GM10248 (cell line): ENCODE measurements at regions of chr2 and their contacts with region 1.

Region 1: GRCh38 chr2:231713730-231714430 is 5.6 kb downstream of the PTMA start:
- DNase-seq: peak; percentile 76
- CTCF ChIP-seq: peak; percentile 95

Region 2: DNA sequence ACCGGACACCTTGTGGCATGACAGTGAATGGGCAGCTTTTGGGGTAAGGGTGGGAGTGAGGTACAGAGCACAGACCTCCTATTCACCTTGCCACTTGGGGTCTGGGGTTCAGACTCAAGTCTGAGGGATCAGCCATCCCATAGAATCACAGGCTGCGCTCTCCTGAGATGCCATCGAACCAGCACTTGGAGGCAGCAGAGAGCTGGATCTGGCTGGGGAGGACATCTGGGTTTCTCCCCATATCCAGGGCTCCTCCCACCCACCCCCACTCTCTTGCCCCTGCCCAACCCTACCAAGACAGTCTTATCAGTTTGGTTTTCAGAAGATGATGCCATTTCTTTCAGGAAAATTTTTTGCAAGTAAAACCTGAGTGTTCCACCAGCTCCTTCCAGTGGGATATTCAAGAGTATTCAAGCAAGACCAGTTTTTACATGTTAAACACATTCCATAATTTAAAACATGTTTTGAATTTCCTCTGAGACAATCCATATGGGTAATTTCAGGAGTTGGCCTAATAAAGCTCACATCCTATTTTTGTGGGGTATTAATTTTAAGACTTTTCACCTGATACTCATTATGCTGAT is 150.4 kb before region 1 on chr2:
- CTCF ChIA-PET with region 1: interaction called, 24 read pairs
- POLR2A ChIA-PET with region 1: no interaction called
- DNase-seq: peak; percentile 79
- CTCF ChIP-seq: peak; percentile 76

Region 3: GRCh38 chr2:231621129-231621879 is 92.6 kb before region 1 on chr2:
- CTCF ChIA-PET with region 1: interaction called, 10 read pairs
- POLR2A ChIA-PET with region 1: no interaction called
- DNase-seq: no peak
- CTCF ChIP-seq: no peak

Region 4: DNA sequence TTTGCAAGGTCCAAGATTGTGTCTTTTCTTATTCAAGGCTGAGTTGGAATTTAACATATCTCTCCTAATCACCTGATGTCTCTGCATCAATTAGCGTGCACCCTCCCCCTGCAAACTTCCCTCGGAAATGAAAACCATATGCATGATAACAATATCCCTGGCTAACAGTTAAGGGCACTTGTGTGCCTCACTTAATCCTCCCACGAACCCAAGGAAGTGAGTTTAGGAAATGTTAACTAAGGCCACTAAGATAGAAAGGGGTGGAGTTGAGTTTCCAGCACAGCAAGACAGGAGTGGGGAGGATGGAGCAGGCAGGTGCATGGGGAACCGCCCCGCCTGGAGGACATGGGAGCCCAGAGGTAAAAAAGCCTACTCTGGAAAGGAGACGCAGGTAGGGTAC is 58.0 kb before region 1 on chr2:
- CTCF ChIA-PET with region 1: interaction called, 67 read pairs
- POLR2A ChIA-PET with region 1: no interaction called
- DNase-seq: peak; percentile 10
- CTCF ChIP-seq: no peak

Region 5: DNA sequence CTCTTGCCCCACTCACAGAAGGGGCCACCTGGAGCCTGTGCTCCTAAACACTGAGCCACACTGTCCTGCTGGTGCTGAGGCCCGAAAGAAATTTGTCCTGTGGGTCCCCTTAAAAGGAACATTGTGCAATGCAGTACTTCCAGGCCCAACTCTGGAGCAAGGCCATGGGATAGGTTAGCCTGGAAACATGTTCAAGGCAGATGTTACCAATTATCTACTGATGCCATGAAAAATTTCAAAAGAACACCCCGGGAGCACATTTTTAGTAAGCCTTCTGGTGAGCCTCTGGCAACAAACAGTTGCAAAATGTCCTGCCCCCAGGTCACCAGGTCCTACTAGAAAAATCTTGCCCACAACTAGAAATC is 17.9 kb before region 1 on chr2:
- CTCF ChIA-PET with region 1: interaction called, 531 read pairs
- POLR2A ChIA-PET with region 1: interaction called, 5 read pairs
- DNase-seq: no peak
- CTCF ChIP-seq: no peak

Region 6: GRCh38 chr2:231745303-231746038 is 31.6 kb after region 1 on chr2:
- CTCF ChIA-PET with region 1: interaction called, 10 read pairs
- POLR2A ChIA-PET with region 1: no interaction called
- DNase-seq: no peak
- CTCF ChIP-seq: no peak